CD8-positive, alpha-beta T cell (primary cell): ENCODE measurements at regions of chr10 and their contacts with region 1.

Region 1: DNA sequence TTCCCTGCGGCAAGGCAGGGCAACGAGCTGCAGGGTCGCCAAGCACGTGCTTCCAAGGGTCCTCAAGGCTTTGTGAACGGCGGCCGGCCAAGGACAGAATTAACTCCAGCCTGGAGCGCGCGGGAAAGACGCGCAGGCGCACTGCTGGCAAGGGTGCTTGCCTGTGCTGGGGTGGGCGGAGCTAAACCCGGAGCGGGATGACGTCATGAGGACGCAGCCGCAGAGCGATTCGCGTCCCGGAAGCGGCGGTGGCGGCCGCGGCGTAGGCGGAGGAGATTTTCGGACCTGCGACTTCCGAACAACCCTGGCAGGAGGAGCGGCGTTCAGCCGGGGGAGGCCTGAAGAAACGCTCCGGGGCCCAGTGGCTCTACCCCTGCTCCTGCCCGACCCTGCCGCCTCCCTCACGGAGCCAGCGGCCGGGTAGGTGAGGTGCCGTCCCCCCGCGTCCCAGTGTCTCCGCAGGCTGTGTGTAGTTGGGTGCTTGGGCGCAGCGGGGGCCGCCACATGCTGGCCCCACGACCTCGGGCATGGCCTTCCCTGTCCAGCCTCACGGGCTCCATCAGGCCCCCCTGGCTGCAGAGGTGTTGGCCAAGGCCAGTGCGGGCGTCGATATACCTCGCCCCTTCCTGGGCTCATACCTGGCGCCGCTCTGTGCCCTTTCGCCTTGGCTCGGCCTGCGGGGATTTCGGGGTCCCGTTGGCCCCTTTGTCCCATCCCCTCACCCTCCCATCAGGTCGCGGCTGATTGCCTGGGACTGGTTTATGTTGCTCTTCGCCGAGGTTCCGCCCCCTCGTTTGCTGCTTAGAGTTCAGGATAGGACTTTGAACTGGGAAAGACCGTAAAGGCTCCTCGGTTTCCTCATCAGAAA is at the start of gene ZFYVE27:
- DNase-seq: peak; percentile 91 to 98 (median 95)
- ATAC-seq: peak; percentile 91
- H3K4me3 ChIP-seq: peak within 1 kb of the TSS; percentile 80 to 88
- H3K4me3 Mint-ChIP-seq: peak within 1 kb of the TSS; percentile 99
- H3K27ac ChIP-seq: peak within 1 kb of the TSS; percentile 93 to 96
- H3K27ac Mint-ChIP-seq: peak within 1 kb of the TSS; percentile 99
- H3K4me1 ChIP-seq: peaks cover 37% of the 10 kb centered on the region
- H3K4me1 Mint-ChIP-seq: peaks cover 58% of the 10 kb centered on the region
- H3K27me3 ChIP-seq: no peaks in the 10 kb centered on the region
- H3K27me3 Mint-ChIP-seq: no peaks in the 10 kb centered on the region
- CTCF ChIP-seq: no peak
- total RNA-seq, gene ZFYVE27: 63.1 to 72.9 TPM

Region 2: DNA sequence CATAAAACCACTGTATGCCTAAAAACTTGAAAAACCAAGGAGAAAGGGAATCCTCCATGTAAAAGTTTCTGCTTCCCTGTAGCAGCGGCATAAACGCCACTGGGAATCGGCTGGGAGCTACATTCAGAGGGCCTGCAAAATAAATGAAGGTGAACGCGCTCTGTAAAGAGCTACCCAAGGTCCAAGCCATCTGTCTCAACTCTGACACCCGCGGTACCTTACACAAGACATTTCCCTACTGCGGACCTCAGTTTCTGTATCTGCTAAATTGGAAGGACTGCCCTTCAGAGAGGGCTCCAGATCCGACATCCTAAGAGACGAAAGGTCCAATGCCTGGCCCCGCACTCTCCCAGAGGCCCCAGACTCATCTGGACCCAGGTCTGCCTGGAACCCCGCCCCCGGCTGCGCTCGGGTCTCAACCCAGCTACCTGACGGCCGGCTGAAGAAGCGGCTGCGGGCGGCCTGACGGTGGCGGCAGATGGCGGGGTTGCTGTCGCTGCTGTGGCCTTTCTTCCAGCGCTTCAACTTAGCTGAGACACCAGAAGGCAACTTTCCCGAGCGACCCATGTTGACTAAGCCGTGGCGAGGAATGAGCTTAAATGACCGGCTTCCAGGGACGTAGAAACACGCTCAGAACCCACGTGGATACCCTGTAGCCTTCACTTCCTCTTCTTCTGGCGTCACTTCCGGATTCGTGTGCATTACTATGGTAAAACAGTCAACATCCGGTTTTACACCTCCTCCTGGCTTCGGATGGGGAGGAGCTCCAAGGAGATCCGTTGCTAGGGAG is 336.3 kb before region 1 on chr10 and contains the start of gene RRP12:
- CTCF ChIA-PET with region 1: no interaction called
- POLR2A ChIA-PET with region 1: no interaction called
- intact Hi-C with region 1: loop called in 1 of 2 experiments (anchors 10 kb)
- DNase-seq: peak; percentile 65 to 99 (median 81)
- ATAC-seq: peak; percentile 93
- H3K4me3 ChIP-seq: peak within 1 kb of the TSS; percentile 69 to 88
- H3K4me3 Mint-ChIP-seq: peak within 1 kb of the TSS; percentile 98
- H3K27ac ChIP-seq: peak within 1 kb of the TSS; percentile 93 to 95
- H3K27ac Mint-ChIP-seq: peak within 1 kb of the TSS; percentile 96
- H3K4me1 ChIP-seq: peaks cover 14% of the 10 kb centered on the region
- H3K4me1 Mint-ChIP-seq: peaks cover 16% of the 10 kb centered on the region
- H3K27me3 ChIP-seq: no peaks in the 10 kb centered on the region
- H3K27me3 Mint-ChIP-seq: no peaks in the 10 kb centered on the region
- CTCF ChIP-seq: no peak
- total RNA-seq, gene RRP12: 104 to 107 TPM

Region 3: GRCh38 chr10:97454330-97455036 is 282.7 kb before region 1 on chr10:
- CTCF ChIA-PET with region 1: no interaction called
- POLR2A ChIA-PET with region 1: no interaction called
- intact Hi-C with region 1: loop called (anchors 5 to 10 kb)
- DNase-seq: peak in 4 of 9 experiments; percentile 25 to 36 (median 28)
- ATAC-seq: peak; percentile 60
- H3K4me3 ChIP-seq: no peak overlapping the region
- H3K4me3 Mint-ChIP-seq: no peak overlapping the region
- H3K27ac ChIP-seq: no peak overlapping the region
- H3K27ac Mint-ChIP-seq: peak overlapping the region; percentile 91
- H3K4me1 ChIP-seq: no peaks in the 10 kb centered on the region
- H3K4me1 Mint-ChIP-seq: peaks cover 19% of the 10 kb centered on the region
- H3K27me3 ChIP-seq: no peaks in the 10 kb centered on the region
- H3K27me3 Mint-ChIP-seq: no peaks in the 10 kb centered on the region
- CTCF ChIP-seq: no peak

Region 4: DNA sequence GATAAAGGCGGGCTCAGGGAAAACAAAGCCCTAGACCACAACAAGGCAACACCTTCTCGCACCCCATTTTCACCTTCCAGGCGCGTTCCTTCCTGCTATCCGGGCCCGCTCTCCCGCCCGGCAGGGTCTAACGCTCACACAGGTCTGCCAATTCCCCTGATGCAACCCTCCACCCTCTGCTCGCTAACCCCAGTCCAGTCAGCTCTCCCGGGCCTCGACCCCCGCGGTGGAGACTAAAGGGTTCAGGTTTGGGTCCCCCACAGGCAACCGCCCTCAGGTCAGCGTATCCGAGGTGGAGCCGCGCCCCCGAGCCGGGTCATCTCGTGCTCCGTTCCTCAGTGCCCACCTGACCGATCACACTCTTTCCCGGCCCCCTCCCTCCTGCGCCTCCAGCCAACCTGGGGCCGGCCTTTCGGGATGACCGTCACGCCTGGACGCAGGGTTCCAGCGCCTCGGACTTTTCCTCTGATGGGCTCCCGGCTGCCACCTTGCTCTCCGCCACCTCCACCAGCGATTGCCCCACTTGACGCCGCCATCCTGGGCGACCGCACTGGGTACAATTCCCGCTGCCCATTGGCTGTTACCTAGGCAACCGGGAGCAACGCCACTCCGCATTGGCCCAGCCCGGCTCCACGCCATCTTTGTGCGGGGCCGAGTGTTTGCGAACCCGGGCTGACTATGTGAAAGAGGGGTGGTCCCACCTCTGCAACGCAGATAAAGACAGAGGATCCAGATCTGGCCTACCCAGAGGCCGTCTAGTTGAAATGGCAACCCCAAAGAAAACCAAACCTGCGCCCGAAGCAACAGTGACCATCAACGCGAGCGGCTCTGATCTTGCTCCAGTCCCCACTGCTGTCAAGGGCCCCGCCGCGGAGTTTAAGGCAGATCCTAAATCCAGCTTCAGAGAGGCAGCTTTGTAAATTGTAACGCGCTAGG is 103.9 kb before region 1 on chr10 and contains the start of gene MORN4:
- CTCF ChIA-PET with region 1: interaction called, 5 read pairs
- POLR2A ChIA-PET with region 1: no interaction called
- intact Hi-C with region 1: loop called in 1 of 2 experiments (anchors 1 kb)
- DNase-seq: peak; percentile 82 to 96 (median 91)
- ATAC-seq: peak; percentile 99
- H3K4me3 ChIP-seq: peak within 1 kb of the TSS; percentile 77 to 89
- H3K4me3 Mint-ChIP-seq: peak within 1 kb of the TSS; percentile 99
- H3K27ac ChIP-seq: peak within 1 kb of the TSS; percentile 18 to 39
- H3K27ac Mint-ChIP-seq: peak within 1 kb of the TSS; percentile 83
- H3K4me1 ChIP-seq: peaks cover 3% of the 10 kb centered on the region
- H3K4me1 Mint-ChIP-seq: peaks cover 13% of the 10 kb centered on the region
- H3K27me3 ChIP-seq: peaks cover 0 to 3% of the 10 kb centered on the region in 2 experiments
- H3K27me3 Mint-ChIP-seq: no peaks in the 10 kb centered on the region
- CTCF ChIP-seq: no peak
- total RNA-seq, gene MORN4: not detected

Region 5: DNA sequence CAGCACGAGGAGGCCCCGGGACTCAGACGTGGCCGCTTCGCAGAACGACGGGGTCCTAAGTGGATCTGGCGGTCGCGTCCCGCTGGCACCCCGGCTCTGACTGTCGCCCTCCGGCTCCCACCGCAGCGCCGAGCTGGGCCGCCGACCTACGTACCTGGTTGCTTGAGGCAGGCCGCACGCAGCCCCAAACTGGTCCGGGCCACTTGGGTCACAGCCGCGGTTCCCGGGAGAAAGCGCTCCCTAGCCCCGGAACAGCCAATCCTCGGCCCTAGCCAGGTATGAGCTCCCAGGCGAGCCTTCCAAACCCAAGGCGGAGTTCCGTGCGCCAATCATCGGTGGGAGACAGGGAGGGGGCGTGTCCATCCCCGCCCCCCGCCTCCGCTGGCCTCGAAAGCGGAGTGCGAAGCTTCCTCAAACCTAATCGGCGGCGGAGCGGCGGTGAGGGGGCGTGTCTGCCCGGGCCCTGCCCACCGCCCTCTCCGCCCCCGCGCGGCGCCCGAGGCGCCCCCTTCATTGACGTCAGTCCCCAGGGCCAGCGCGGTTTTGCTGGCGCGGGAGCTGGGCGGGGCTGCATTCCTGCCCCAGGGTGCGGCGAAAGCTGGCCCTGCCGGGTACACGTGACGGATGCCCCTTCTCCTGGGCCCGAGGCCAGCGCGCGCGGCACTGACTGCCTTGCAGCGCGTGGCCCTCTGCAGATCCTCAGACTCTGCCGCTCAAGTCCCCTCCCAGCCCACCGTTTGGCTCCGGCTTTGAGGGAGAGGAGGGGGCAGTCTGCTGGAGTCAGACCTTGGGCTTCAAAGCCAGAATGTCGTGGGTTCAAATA is 50.0 kb before region 1 on chr10 and contains the start of gene AVPI1:
- CTCF ChIA-PET with region 1: interaction called, 172 read pairs
- POLR2A ChIA-PET with region 1: interaction called, 32 read pairs
- intact Hi-C with region 1: loop called (anchors 1 kb)
- DNase-seq: peak; percentile 90 to 98 (median 96)
- ATAC-seq: peak; percentile 94
- H3K4me3 ChIP-seq: peak within 1 kb of the TSS; percentile 77 to 82
- H3K4me3 Mint-ChIP-seq: peak within 1 kb of the TSS; percentile 89
- H3K27ac ChIP-seq: peak within 1 kb of the TSS; percentile 47 to 64
- H3K27ac Mint-ChIP-seq: peak within 1 kb of the TSS; percentile 86
- H3K4me1 ChIP-seq: peaks cover 22% of the 10 kb centered on the region
- H3K4me1 Mint-ChIP-seq: peaks cover 23% of the 10 kb centered on the region
- H3K27me3 ChIP-seq: no peaks in the 10 kb centered on the region
- H3K27me3 Mint-ChIP-seq: peaks cover 4% of the 10 kb centered on the region
- CTCF ChIP-seq: no peak
- total RNA-seq, gene AVPI1: 13.7 TPM

Region 6: DNA sequence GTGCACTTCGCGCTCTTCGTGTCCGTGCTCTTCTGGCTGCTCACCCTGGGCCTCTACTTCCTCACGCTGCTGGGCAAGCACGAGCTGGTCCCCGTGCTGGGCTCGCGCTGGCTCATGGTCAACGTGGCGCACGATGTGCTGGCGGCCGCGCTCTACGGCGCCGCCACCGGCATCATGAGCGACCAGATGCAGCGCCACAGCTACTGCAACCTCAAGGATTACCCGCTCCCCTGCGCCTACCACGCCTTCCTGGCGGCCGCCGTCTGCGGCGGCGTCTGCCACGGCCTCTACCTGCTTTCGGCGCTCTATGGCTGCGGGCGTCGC is 23.1 kb before region 1 on chr10:
- CTCF ChIA-PET with region 1: interaction called, 224 read pairs
- POLR2A ChIA-PET with region 1: interaction called, 5 read pairs
- intact Hi-C with region 1: loop called in 1 of 2 experiments (anchors 2 kb)
- DNase-seq: peak in 8 of 9 experiments; percentile 19 to 82 (median 59)
- ATAC-seq: peak; percentile 83
- H3K4me3 ChIP-seq: peak overlapping the region; percentile 57 to 63
- H3K4me3 Mint-ChIP-seq: peak overlapping the region; percentile 99
- H3K27ac ChIP-seq: no peak overlapping the region
- H3K27ac Mint-ChIP-seq: peak overlapping the region; percentile 82
- H3K4me1 ChIP-seq: peaks cover 9% of the 10 kb centered on the region
- H3K4me1 Mint-ChIP-seq: peaks cover 15% of the 10 kb centered on the region
- H3K27me3 ChIP-seq: peaks cover 0 to 3% of the 10 kb centered on the region in 2 experiments
- H3K27me3 Mint-ChIP-seq: peaks cover 17% of the 10 kb centered on the region
- CTCF ChIP-seq: no peak

Region 7: DNA sequence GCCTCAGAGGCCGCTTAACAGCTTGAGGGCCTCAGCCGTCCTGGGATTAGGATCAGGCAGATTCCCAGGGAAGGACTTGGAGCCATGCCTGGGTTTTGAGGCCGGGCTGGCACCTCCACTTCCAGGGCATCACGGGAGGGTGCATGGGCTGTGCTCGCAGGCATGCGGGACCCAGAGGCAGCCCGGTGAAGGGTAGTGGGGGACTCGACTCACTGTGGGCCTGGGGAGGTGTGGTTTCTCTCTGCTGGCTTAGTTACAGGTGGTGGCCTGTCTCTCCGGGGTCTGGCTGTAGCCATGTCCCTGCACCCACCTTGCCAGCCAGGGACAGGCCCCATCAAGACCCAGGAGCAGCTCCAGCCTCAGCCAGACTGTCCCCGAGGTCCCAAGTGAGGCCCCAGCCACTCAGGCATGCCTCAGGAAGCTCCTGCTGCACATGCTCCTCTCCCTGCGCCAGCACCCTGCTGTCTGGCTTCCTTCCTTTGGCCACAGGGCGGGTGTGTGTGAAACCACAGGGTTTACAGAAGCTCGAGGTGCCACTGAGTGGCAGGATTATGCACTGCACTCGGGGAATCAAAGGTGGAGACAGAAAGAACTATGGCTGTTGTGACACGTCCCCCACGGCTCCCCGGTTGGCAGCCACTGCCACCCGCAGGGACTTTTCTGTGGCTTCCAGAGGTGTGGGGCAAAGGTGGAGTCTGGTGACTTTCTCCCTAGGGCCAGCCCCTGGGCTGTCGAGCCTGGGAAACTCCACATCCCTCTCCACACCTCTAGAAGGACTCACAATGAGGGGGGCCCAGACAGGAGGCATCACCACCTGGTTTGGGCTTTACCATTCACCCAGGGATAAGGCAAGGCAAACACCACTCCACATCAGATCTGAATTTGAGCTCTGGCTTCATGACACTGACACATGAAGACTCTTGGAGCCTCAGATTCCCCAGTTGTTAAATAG is 132.2 kb after region 1 on chr10:
- CTCF ChIA-PET with region 1: interaction called, 18 read pairs
- POLR2A ChIA-PET with region 1: no interaction called
- intact Hi-C with region 1: loop called in 1 of 2 experiments (anchors 1 kb)
- DNase-seq: peak; percentile 65 to 93 (median 85)
- ATAC-seq: peak; percentile 99
- H3K4me3 ChIP-seq: peak overlapping the region; percentile 11 to 18
- H3K4me3 Mint-ChIP-seq: peak overlapping the region; percentile 43
- H3K27ac ChIP-seq: peak overlapping the region in 1 of 2 experiments; percentile 18
- H3K27ac Mint-ChIP-seq: peak overlapping the region; percentile 55
- H3K4me1 ChIP-seq: peaks cover 16% of the 10 kb centered on the region
- H3K4me1 Mint-ChIP-seq: peaks cover 12% of the 10 kb centered on the region
- H3K27me3 ChIP-seq: no peaks in the 10 kb centered on the region
- H3K27me3 Mint-ChIP-seq: peaks cover 8% of the 10 kb centered on the region
- CTCF ChIP-seq: peak; percentile 77

Region 8: GRCh38 chr10:97981816-97982215 is 244.7 kb after region 1 on chr10:
- CTCF ChIA-PET with region 1: no interaction called
- POLR2A ChIA-PET with region 1: no interaction called
- intact Hi-C with region 1: no loop called
- DNase-seq: no peak
- ATAC-seq: no peak
- H3K4me3 ChIP-seq: no peak overlapping the region
- H3K4me3 Mint-ChIP-seq: no peak overlapping the region
- H3K27ac ChIP-seq: no peak overlapping the region
- H3K27ac Mint-ChIP-seq: no peak overlapping the region
- H3K4me1 ChIP-seq: no peaks in the 10 kb centered on the region
- H3K4me1 Mint-ChIP-seq: no peaks in the 10 kb centered on the region
- H3K27me3 ChIP-seq: peaks cover 0 to 3% of the 10 kb centered on the region in 2 experiments
- H3K27me3 Mint-ChIP-seq: peaks cover 40% of the 10 kb centered on the region
- CTCF ChIP-seq: no peak